HEK293 (cell line): ENCODE measurements at regions of chr2 and their contacts with region 1.

Region 1: DNA sequence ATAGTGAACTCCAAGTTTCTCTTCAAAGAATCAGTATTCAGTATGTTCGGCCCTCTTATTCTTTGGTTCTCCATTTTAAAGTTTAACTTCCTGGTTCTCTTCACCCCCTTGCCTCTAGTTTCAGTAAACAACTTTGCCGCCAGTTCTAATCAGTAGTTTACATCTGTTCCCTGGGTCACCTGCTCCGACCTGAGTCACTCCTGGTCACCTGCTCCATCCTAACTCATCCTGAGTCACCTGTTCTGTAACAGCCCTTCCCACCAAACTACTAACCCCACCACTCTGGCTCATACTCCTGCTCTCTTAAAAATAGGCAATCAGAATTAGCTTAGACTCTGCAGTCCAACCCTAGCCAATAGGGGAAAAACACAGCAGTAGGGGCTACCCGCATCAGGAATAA is 23.7 kb upstream of the TEX51 start:
- H3K4me3 ChIP-seq: no peak overlapping the region
- H3K27ac ChIP-seq: no peak overlapping the region
- H3K4me1 ChIP-seq: no peaks in the 10 kb centered on the region
- CTCF ChIP-seq: no peak

Region 2: DNA sequence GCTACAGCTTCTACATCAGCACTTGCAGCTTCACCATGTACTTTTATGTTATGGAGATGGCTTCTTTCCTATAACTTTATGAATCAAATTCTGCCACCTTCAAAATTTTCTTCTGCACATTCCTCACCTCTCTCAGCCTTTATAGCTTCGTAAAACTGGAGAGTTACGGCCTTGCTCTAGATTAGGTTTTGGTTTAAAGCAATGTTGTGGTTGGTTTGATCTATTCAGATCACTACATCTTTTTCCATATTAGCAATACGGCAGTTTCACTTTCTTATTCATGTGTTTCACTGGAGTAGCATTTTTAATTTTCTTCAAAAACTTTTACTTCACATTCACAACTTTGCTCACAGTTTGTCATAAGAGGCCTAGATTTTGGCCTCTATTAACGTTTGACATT is 461.9 kb before region 1 on chr2:
- CTCF ChIA-PET with region 1: no interaction called
- POLR2A ChIA-PET with region 1: no interaction called
- H3K4me3 ChIP-seq: no peak overlapping the region
- H3K27ac ChIP-seq: no peak overlapping the region
- H3K4me1 ChIP-seq: no peaks in the 10 kb centered on the region
- CTCF ChIP-seq: no peak

Region 3: GRCh38 chr2:126886211-126886915 is 11.4 kb after region 1 on chr2:
- CTCF ChIA-PET with region 1: interaction called, 27 read pairs
- POLR2A ChIA-PET with region 1: no interaction called
- H3K4me3 ChIP-seq: peak overlapping the region; percentile 13; the same call in 1 of the 2 replicates
- H3K27ac ChIP-seq: no peak overlapping the region
- H3K4me1 ChIP-seq: no peaks in the 10 kb centered on the region
- CTCF ChIP-seq: peak; percentile 91